ENCODE measurements at regions of chr10 and their contacts with region 1.

Region 1: GRCh38 chr10:11170993-11171851 is 153.6 kb downstream of the CELF2 start:
- DNase-seq: peak; percentile 80
- ATAC-seq: peak; percentile 49
- H3K4me3 Mint-ChIP-seq: no peak overlapping the region
- H3K27ac Mint-ChIP-seq: no peak overlapping the region
- H3K4me1 Mint-ChIP-seq: peaks cover 41% of the 10 kb centered on the region
- H3K27me3 Mint-ChIP-seq: no peaks in the 10 kb centered on the region

Region 2: GRCh38 chr10:11086177-11086865 is 84.9 kb before region 1 on chr10:
- CTCF ChIA-PET with region 1: no interaction called
- POLR2A ChIA-PET with region 1: no interaction called
- intact Hi-C with region 1: no loop called
- DNase-seq: no peak
- ATAC-seq: no peak
- H3K4me3 Mint-ChIP-seq: no peak overlapping the region
- H3K27ac Mint-ChIP-seq: no peak overlapping the region
- H3K4me1 Mint-ChIP-seq: peaks cover 5% of the 10 kb centered on the region
- H3K27me3 Mint-ChIP-seq: no peaks in the 10 kb centered on the region

Region 3: GRCh38 chr10:11145495-11145855 is 25.7 kb before region 1 on chr10:
- CTCF ChIA-PET with region 1: interaction called, 32 read pairs
- POLR2A ChIA-PET with region 1: interaction called, 42 read pairs
- intact Hi-C with region 1: no loop called
- DNase-seq: peak; percentile 74
- ATAC-seq: peak; percentile 78
- H3K4me3 Mint-ChIP-seq: peak overlapping the region; percentile 70
- H3K27ac Mint-ChIP-seq: peak overlapping the region; percentile 96
- H3K4me1 Mint-ChIP-seq: peaks cover 91% of the 10 kb centered on the region
- H3K27me3 Mint-ChIP-seq: no peaks in the 10 kb centered on the region